Activated T-helper 2 cell treated with anti-CD3 and anti-CD28 coated beads, Interferon-gamma antibody, Interleukin-2, Interleukin-4, amounts not matched to agents 10 μg/mL and 5 μg/mL and 100 μg/mL, durations not matched to agents 14 hours and 24 hours and 36 hours (primary cell): ENCODE measurements at regions of chr3 and their contacts with region 1.

Region 1: GRCh38 chr3:160801386-160802118 is 45.5 kb downstream of the PPM1L start:
- DNase-seq: peak; percentile 72
- H3K4me3 Mint-ChIP-seq: peak overlapping the region; percentile 37
- H3K27ac Mint-ChIP-seq: peak overlapping the region; percentile 70
- H3K4me1 Mint-ChIP-seq: peaks cover 20% of the 10 kb centered on the region
- H3K27me3 Mint-ChIP-seq: peaks cover 15% of the 10 kb centered on the region

Region 2: GRCh38 chr3:160565442-160566403 is 235.8 kb before region 1 on chr3 and contains the start of gene KPNA4:
- intact Hi-C with region 1: loop called (anchors 2 kb)
- DNase-seq: peak; percentile 96
- H3K4me3 Mint-ChIP-seq: peak within 1 kb of the TSS; percentile 99
- H3K27ac Mint-ChIP-seq: peak within 1 kb of the TSS; percentile 96
- H3K4me1 Mint-ChIP-seq: peaks cover 61% of the 10 kb centered on the region
- H3K27me3 Mint-ChIP-seq: no peaks in the 10 kb centered on the region
- total RNA-seq, gene KPNA4: 69.8 and 71.2 TPM in 2 replicates

Region 3: GRCh38 chr3:160822931-160823330 is 21.4 kb after region 1 on chr3:
- intact Hi-C with region 1: no loop called
- DNase-seq: no peak
- H3K4me3 Mint-ChIP-seq: no peak overlapping the region
- H3K27ac Mint-ChIP-seq: no peak overlapping the region
- H3K4me1 Mint-ChIP-seq: no peaks in the 10 kb centered on the region
- H3K27me3 Mint-ChIP-seq: no peaks in the 10 kb centered on the region

Region 4: GRCh38 chr3:161069511-161070263 is 268.1 kb after region 1 on chr3:
- intact Hi-C with region 1: loop called (anchors 10 kb)
- DNase-seq: no peak
- H3K4me3 Mint-ChIP-seq: no peak overlapping the region
- H3K27ac Mint-ChIP-seq: no peak overlapping the region
- H3K4me1 Mint-ChIP-seq: peaks cover 31% of the 10 kb centered on the region
- H3K27me3 Mint-ChIP-seq: peaks cover 14% of the 10 kb centered on the region

Region 5: DNA sequence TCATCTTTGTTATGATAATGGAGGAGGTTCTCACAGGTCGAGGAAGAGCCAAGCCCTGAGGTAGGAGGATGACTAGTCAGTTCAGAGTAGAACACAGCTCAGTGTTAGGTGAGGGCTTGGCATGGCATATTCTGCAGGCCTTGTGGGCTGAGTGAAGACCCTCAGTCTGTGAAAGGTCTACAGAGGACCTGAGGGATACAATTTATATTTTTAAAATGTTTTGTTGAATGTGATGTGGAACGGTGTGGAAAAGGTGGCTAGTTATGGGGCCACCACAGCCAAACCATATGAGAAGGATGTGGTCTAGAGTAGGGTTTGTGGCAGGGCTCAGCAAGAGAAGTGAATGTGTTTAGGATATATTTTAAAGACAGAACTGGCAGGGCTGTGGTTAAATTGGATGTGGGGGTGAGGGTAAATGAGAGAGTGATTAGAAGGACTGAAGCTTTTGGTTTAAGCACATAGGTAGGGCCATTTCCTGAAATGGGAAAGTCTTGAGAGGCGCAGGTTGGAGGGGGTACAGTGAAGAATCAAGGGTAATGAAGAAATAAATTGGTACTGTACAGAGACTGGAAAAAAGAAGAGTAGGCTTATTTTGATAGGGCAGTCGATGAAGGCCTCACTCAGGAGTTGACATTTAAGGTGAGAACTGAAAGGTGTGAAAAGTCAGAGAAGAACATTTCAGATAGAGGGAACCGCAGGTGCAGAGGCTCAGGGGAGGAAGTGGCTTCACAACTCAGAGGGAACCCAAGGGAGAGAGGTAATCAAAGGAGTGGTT is 509.3 kb after region 1 on chr3:
- intact Hi-C with region 1: loop called (anchors 5 kb)
- DNase-seq: peak; percentile 46
- H3K4me3 Mint-ChIP-seq: peak overlapping the region; percentile 0
- H3K27ac Mint-ChIP-seq: peak overlapping the region; percentile 24
- H3K4me1 Mint-ChIP-seq: peaks cover 22% of the 10 kb centered on the region
- H3K27me3 Mint-ChIP-seq: peaks cover 56% of the 10 kb centered on the region